ENCODE measurements at regions of chrX and their contacts with region 1.

Region 1: DNA sequence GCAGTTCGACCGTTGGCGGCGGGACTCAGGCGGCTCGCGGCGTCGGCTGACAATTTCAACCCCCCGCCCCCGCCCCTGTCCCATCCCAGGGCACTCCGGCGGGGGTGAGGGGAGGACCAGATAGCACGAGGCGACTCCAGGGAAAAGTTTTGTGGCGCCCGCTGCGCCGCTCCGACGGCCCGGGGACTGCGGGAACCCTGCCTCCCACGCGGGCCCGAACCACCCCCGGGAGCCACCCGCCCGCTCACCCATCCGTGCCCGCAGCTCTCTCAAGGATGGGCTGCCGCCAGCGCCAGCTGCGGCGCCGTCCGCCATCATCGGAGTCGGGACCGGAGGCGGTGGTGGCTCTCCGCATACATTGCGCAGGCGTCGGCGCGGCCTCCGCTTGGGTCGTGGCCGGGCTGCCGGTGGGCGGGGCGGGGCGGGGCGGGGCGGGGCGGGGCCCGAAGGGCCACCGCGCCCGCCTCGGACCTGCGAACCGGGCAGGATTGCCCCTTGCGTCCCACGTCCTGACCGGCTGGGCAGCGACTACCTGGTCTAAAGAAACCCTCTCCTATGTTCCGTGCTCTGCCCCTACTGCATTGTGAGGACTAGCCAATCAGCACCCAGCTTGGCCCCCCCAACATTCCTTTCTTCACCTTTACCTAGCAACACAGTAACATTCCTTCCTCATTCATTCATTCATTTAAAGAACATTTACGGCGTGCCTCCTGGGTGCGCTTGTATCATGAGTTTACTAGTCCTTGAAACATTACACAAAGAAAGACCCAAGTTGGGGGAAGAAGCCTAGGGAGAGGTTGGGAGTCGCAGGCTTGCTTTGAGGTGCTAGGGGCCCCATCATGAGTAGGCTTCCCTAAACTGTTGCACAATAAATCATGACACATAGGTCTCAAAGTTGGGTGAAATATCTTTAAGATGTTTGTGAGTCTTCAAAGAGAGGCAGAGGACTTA is at the start of gene MAP7D3:
- DNase-seq: peak; percentile 34 to 46
- ATAC-seq: peak; percentile 76 to 85
- H3K4me3 ChIP-seq: peak within 1 kb of the TSS; percentile 70 to 86 (median 71)
- H3K27ac ChIP-seq: peak within 1 kb of the TSS; percentile 67 to 80 (median 78)
- H3K4me1 ChIP-seq: no peaks in the 10 kb centered on the region
- H3K27me3 ChIP-seq: no peaks in the 10 kb centered on the region
- CTCF ChIP-seq: no peak
- POLR2A ChIP-seq: peak; percentile 40 to 48
- total RNA-seq, gene MAP7D3: 10.5 to 26.1 (median 13.9) TPM

Region 2: GRCh38 chrX:136021160-136021559 is 230.2 kb before region 1 on chrX:
- in situ Hi-C with region 1: loop called in 2 of 4 experiments (anchors 25 kb)
- intact Hi-C with region 1: no loop called
- DNase-seq: no peak
- ATAC-seq: no peak
- H3K4me3 ChIP-seq: no peak overlapping the region
- H3K27ac ChIP-seq: no peak overlapping the region
- H3K4me1 ChIP-seq: no peaks in the 10 kb centered on the region
- H3K27me3 ChIP-seq: no peaks in the 10 kb centered on the region
- CTCF ChIP-seq: no peak
- POLR2A ChIP-seq: no peak

Region 3: GRCh38 chrX:136028251-136028984 is 222.9 kb before region 1 on chrX:
- in situ Hi-C with region 1: loop called in 2 of 4 experiments (anchors 25 kb)
- intact Hi-C with region 1: no loop called
- DNase-seq: no peak
- ATAC-seq: peak; percentile 64 to 72
- H3K4me3 ChIP-seq: no peak overlapping the region
- H3K27ac ChIP-seq: peak overlapping the region in 1 of 4 donors; percentile 70
- H3K4me1 ChIP-seq: peaks cover 9 to 19% of the 10 kb centered on the region in 2 donors
- H3K27me3 ChIP-seq: no peaks in the 10 kb centered on the region
- CTCF ChIP-seq: peak; percentile 37 to 70 (median 47)
- POLR2A ChIP-seq: no peak

Region 4: DNA sequence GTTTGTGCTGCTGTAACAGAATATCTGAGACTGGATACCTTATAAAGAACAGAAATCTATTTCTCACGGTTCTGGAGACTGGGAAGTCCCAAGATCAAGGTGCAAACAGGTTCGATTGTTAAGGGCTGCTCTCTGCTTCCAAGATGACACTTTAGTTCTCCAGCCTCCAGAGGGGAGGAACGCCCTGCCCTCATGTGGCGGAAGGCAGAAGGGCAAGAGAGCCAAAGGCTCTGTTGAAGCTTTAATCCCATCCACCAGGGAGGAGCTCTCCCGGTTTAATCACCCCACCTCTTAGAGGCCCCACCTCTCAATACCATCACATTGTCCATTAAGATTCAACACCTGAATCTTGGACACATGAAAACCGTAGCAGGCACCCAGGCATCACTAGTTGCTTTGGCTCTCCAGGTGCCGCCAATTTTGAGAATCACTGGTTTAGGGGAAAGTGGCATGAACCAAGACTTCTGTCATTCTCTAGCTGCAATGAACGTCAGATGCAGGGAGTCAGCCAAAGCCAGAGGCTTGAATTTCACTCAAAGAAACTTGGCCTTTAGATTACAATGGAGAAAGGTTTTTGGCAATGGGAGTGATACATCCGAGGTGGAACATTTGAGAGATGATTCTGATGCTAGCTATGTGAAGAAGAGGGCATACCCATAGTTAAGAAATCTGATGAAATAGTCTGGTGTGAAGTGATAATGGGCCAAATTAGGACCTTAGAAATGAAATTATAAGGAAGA is 88.3 kb before region 1 on chrX:
- in situ Hi-C with region 1: loop called in 1 of 4 experiments (anchors 25 kb)
- intact Hi-C with region 1: loop called (anchors 5 kb)
- DNase-seq: peak in 1 of 2 donors; percentile 51
- ATAC-seq: peak; percentile 61 to 79
- H3K4me3 ChIP-seq: no peak overlapping the region
- H3K27ac ChIP-seq: peak overlapping the region; percentile 10 to 35 (median 16)
- H3K4me1 ChIP-seq: peaks cover 6 to 8% of the 10 kb centered on the region in 2 donors
- H3K27me3 ChIP-seq: no peaks in the 10 kb centered on the region
- CTCF ChIP-seq: peak; percentile 51 to 75 (median 74)
- POLR2A ChIP-seq: no peak

Region 5: DNA sequence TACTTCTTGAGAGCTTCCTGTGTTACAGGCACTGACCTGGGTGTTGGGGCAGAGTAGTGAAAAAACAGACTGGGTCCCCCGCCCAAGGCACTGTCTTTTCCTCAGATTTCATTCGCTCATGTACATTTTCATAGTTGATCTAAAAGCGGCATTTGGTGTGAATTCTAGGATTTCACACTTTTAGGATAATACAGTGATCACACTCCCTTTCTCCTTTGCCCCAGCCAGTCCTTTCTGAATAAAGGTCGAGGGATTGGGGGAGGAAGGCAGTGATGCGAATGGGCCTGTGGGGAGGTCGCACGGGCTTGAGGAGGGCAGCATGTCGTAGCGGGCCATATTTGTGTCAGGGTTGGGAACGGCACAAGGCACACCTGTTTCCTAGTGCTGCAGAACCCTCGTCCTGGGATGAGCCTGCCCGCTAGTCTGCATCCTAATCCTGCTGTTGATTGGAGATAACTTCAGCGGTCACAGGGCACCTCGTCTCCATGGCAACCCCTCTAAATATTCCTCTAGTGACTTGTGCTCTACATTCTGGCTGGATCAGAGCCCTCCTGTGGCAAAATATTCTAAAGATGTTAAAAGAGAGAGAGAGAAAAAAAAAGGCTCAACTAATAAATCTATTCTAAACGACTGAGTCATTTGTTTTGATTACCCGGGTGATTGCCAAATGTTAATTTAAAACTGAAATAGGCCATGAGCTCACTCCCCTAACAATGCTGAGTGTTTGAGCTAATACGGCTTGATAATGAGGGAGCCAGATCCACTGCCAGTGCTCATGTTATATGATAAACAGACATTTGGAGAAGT is 82.2 kb before region 1 on chrX:
- in situ Hi-C with region 1: loop called in 1 of 4 experiments (anchors 25 kb)
- intact Hi-C with region 1: loop called (anchors 5 kb)
- DNase-seq: peak in 1 of 2 donors; percentile 35
- ATAC-seq: peak; percentile 16 to 78
- H3K4me3 ChIP-seq: peak overlapping the region in 1 of 4 donors; percentile 18
- H3K27ac ChIP-seq: peak overlapping the region; percentile 78 to 92 (median 84)
- H3K4me1 ChIP-seq: peaks cover 7 to 29% of the 10 kb centered on the region in 2 donors
- H3K27me3 ChIP-seq: no peaks in the 10 kb centered on the region
- CTCF ChIP-seq: no peak
- POLR2A ChIP-seq: no peak

Region 6: DNA sequence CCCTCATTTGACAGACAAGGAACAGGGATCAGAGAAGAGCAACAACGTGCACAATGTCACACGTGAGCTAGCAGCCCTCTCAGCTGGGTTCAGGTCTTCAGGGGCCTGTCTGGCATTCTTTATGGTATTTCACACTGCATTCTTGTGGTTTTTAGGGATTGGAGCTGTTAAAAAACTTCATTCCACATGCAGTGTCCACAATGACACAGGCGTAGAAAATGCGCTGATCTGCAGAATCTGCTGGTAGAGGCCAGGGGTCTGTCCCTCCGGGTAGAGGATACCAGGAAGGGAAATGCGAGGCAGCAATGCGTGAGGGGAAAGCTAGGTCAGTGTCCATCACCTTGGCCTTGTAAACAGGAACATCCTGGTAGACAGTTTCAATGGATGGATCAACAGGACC is 36.8 kb before region 1 on chrX:
- in situ Hi-C with region 1: no loop called
- intact Hi-C with region 1: loop called (anchors 5 kb)
- DNase-seq: no peak
- ATAC-seq: no peak
- H3K4me3 ChIP-seq: no peak overlapping the region
- H3K27ac ChIP-seq: peak overlapping the region in 2 of 4 donors; percentile 31 to 92
- H3K4me1 ChIP-seq: no peaks in the 10 kb centered on the region
- H3K27me3 ChIP-seq: no peaks in the 10 kb centered on the region
- CTCF ChIP-seq: no peak
- POLR2A ChIP-seq: no peak

Region 7: GRCh38 chrX:136496770-136497598 is 245.7 kb after region 1 on chrX and contains the start of gene HTATSF1:
- in situ Hi-C with region 1: no loop called
- intact Hi-C with region 1: loop called (anchors 2 kb)
- DNase-seq: peak; percentile 65 to 81
- ATAC-seq: peak; percentile 89 to 91
- H3K4me3 ChIP-seq: peak within 1 kb of the TSS; percentile 69 to 78 (median 71)
- H3K27ac ChIP-seq: peak within 1 kb of the TSS; percentile 83 to 96 (median 94)
- H3K4me1 ChIP-seq: peaks cover 11% of the 10 kb centered on the region in 2 donors
- H3K27me3 ChIP-seq: no peaks in the 10 kb centered on the region
- CTCF ChIP-seq: no peak
- POLR2A ChIP-seq: peak; percentile 29 to 45
- total RNA-seq, gene HTATSF1: 97.5 to 157 (median 114) TPM

Region 8: GRCh38 chrX:136839196-136839595 is 587.9 kb after region 1 on chrX:
- in situ Hi-C with region 1: no loop called
- intact Hi-C with region 1: no loop called
- DNase-seq: no peak
- ATAC-seq: no peak
- H3K4me3 ChIP-seq: no peak overlapping the region
- H3K27ac ChIP-seq: no peak overlapping the region
- H3K4me1 ChIP-seq: no peaks in the 10 kb centered on the region
- H3K27me3 ChIP-seq: no peaks in the 10 kb centered on the region
- CTCF ChIP-seq: no peak
- POLR2A ChIP-seq: no peak

Measured in gastrocnemius medialis (tissue), 4 donors.